ENCODE measurements at regions of chr1 and their contacts with region 1.

Region 1: DNA sequence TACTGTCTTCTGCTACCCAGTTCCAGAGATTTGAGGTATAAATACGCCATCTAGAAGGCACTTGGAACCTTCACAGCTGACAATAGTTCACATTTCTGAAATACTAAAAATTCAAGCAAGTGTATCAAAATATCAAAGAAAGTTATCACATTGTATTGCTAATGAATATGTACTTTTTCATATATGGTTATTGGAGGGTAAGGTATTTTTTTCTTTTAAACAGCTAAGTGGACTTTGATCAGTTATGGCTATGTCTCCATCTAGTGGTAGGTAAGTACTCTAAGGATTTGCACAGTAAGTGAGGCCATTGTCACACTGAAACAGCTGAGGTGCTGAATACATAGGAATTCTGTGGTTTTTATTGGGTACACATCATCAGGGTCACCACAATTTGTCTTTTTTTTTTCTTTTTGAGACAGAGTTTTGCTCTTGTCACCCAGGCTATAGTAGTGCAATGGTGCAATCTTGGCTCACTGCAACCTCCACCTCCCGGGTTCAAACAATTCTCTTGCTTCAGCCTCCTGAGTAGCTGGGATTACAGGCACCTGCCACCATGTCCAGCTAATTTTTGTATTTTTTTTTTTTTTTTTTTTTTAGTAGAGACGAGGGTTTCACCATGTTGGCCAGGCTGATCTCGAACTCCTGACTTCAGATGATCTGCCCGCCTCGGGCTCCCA is 49.1 kb upstream of the CR2 start:
- DNase-seq: no peak
- H3K4me3 ChIP-seq: no peak overlapping the region
- H3K27ac ChIP-seq: no peak overlapping the region
- H3K4me1 ChIP-seq: no peaks in the 10 kb centered on the region
- H3K27me3 ChIP-seq: no peaks in the 10 kb centered on the region
- CTCF ChIP-seq: peak; percentile 47 to 76 (median 64)
- EP300 ChIP-seq: no peak
- POLR2A ChIP-seq: no peak

Region 2: GRCh38 chr1:207052911-207053769 is 351.8 kb before region 1 on chr1 and contains the start of gene PFKFB2:
- intact Hi-C with region 1: loop called in 2 of 4 experiments (anchors 10 kb)
- DNase-seq: peak; percentile 96 to 99 (median 98)
- H3K4me3 ChIP-seq: peak within 1 kb of the TSS; percentile 65
- H3K27ac ChIP-seq: peak within 1 kb of the TSS; percentile 75 to 83
- H3K4me1 ChIP-seq: peaks cover 7% of the 10 kb centered on the region
- H3K27me3 ChIP-seq: no peaks in the 10 kb centered on the region
- CTCF ChIP-seq: peak in 1 of 3 donors; percentile 61
- EP300 ChIP-seq: no peak
- POLR2A ChIP-seq: peak; percentile 80
- total RNA-seq, gene PFKFB2: 5.0 to 11.4 (median 8.7) TPM

Region 3: DNA sequence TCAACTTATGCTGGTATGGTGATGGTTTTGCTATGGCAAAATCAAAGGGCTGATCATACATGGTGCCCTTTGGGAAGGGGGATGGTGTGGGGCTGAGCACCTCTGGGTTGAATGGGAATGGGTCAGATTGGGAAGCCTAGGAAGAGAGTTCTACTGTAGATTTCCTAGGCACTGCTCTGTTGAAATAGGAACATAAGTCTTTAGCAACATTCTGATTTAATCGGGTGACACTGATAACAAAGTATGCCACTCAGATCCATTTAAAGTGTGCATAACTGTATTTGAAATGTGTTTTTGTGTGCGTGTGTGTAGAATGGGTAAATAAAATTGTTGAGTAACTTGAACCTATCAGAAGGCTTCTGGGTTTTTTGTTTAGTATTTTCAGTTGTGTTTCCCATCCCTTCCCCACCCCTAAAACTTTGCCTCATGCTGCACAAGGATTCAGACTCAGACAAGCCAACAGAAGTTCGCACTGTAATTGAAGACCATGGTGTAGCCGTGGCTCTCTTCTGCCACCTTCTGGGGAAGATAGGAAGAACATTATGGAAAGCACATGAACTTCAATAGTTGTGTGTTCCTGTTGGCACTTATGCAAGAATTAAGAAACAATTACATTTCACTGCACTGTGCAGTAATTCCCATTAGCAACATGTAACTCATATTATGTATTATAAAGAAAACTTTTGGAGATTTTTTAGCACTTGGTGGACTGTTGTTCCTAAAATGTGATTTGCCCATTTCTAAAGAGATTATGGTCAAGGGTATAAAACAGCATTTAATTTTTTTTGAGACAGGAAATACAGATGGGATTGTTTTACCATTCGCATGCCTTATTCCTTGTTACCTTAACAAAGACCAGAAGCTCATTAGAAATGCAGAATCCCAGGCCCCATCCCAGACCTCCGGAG is 327.3 kb before region 1 on chr1:
- intact Hi-C with region 1: loop called in 3 of 4 experiments (anchors 5 to 10 kb)
- DNase-seq: peak in 4 of 5 donors; percentile 30 to 74 (median 45)
- H3K4me3 ChIP-seq: no peak overlapping the region
- H3K27ac ChIP-seq: no peak overlapping the region
- H3K4me1 ChIP-seq: no peaks in the 10 kb centered on the region
- H3K27me3 ChIP-seq: no peaks in the 10 kb centered on the region
- CTCF ChIP-seq: peak; percentile 71 to 80 (median 79)
- EP300 ChIP-seq: no peak
- POLR2A ChIP-seq: no peak

Region 4: GRCh38 chr1:207084701-207085180 is 320.2 kb before region 1 on chr1:
- intact Hi-C with region 1: loop called in 3 of 4 experiments (anchors 5 to 10 kb)
- DNase-seq: peak in 3 of 5 donors; percentile 20 to 49 (median 48)
- H3K4me3 ChIP-seq: no peak overlapping the region
- H3K27ac ChIP-seq: no peak overlapping the region
- H3K4me1 ChIP-seq: peaks cover 3% of the 10 kb centered on the region
- H3K27me3 ChIP-seq: no peaks in the 10 kb centered on the region
- CTCF ChIP-seq: peak in 2 of 3 donors; percentile 37 to 57
- EP300 ChIP-seq: no peak
- POLR2A ChIP-seq: no peak

Measured in ovary (tissue), 10 donors.